Gastrocnemius medialis (tissue), 4 donors: ENCODE measurements at regions of chr12 and their contacts with region 1.

Region 1: GRCh38 chr12:47904713-47905310 is at the start of gene VDR:
- DNase-seq: peak; percentile 63 to 74
- ATAC-seq: peak; percentile 83
- H3K4me3 ChIP-seq: peak within 1 kb of the TSS; percentile 60 to 83 (median 70)
- H3K27ac ChIP-seq: peak within 1 kb of the TSS; percentile 58 to 81 (median 70)
- H3K4me1 ChIP-seq: peaks cover 20% of the 10 kb centered on the region in 2 donors
- H3K27me3 ChIP-seq: peaks cover 0 to 10% (median 4%) of the 10 kb centered on the region in 3 donors
- CTCF ChIP-seq: peak in 1 of 5 experiments; percentile 20
- POLR2A ChIP-seq: peak; percentile 79 to 84
- total RNA-seq, gene VDR: 3.2 to 6.1 (median 4.4) TPM

Region 2: DNA sequence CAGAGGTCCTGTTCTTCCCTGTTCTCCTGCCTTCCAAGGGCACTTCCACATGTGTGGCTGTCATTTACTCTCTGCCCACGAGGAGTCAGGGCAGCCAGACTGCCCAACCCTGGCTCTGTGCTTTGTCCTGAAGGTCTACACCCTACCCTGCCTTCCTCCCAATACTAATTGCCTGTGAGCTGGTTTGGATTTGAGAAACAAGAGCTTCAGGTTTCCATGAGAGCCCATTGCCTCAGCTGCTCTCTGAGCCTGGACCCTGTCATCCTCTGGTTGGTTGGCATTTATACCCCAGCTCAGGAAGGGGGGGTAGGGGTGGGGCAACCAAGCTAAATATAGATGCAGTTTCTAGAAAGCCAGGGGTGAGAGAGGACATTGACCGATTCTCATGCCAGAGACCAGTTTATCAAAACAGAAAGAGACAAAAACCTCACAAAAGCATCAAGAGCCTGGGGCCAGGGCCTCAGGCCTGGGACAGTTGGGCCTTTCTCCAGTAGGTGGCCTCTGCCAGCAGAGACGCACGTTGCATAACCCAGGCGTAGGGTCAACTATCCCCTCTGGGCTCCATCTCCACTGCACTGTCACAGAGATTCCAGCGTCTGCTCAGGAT is 34.5 kb before region 1 on chr12:
- in situ Hi-C with region 1: no loop called
- intact Hi-C with region 1: loop called (anchors 1 kb)
- DNase-seq: peak; percentile 48 to 83
- ATAC-seq: peak; percentile 92 to 97
- H3K4me3 ChIP-seq: no peak overlapping the region
- H3K27ac ChIP-seq: peak overlapping the region; percentile 74 to 84 (median 78)
- H3K4me1 ChIP-seq: peaks cover 17 to 19% of the 10 kb centered on the region in 2 donors
- H3K27me3 ChIP-seq: no peaks in the 10 kb centered on the region
- CTCF ChIP-seq: peak; percentile 12 to 41 (median 23)
- POLR2A ChIP-seq: peak; percentile 7 to 30

Region 3: GRCh38 chr12:48078901-48079300 is 174.1 kb after region 1 on chr12:
- in situ Hi-C with region 1: no loop called
- intact Hi-C with region 1: no loop called
- DNase-seq: no peak
- ATAC-seq: no peak
- H3K4me3 ChIP-seq: no peak overlapping the region
- H3K27ac ChIP-seq: no peak overlapping the region
- H3K4me1 ChIP-seq: peaks cover 5% of the 10 kb centered on the region in 2 donors
- H3K27me3 ChIP-seq: no peaks in the 10 kb centered on the region
- CTCF ChIP-seq: no peak
- POLR2A ChIP-seq: no peak

Region 4: GRCh38 chr12:48197971-48198671 is 293.3 kb after region 1 on chr12:
- in situ Hi-C with region 1: no loop called
- intact Hi-C with region 1: loop called (anchors 10 kb)
- DNase-seq: peak; percentile 98 to 99
- ATAC-seq: peak; percentile 92 to 96
- H3K4me3 ChIP-seq: peak overlapping the region; percentile 88 to 94 (median 92)
- H3K27ac ChIP-seq: peak overlapping the region; percentile 97 to 100 (median 99)
- H3K4me1 ChIP-seq: peaks cover 20% of the 10 kb centered on the region in 2 donors
- H3K27me3 ChIP-seq: no peaks in the 10 kb centered on the region
- CTCF ChIP-seq: no peak
- POLR2A ChIP-seq: peak; percentile 97 to 98